Heart right ventricle (tissue), 16 donors: ENCODE measurements at regions of chrX and their contacts with region 1.

Region 1: DNA sequence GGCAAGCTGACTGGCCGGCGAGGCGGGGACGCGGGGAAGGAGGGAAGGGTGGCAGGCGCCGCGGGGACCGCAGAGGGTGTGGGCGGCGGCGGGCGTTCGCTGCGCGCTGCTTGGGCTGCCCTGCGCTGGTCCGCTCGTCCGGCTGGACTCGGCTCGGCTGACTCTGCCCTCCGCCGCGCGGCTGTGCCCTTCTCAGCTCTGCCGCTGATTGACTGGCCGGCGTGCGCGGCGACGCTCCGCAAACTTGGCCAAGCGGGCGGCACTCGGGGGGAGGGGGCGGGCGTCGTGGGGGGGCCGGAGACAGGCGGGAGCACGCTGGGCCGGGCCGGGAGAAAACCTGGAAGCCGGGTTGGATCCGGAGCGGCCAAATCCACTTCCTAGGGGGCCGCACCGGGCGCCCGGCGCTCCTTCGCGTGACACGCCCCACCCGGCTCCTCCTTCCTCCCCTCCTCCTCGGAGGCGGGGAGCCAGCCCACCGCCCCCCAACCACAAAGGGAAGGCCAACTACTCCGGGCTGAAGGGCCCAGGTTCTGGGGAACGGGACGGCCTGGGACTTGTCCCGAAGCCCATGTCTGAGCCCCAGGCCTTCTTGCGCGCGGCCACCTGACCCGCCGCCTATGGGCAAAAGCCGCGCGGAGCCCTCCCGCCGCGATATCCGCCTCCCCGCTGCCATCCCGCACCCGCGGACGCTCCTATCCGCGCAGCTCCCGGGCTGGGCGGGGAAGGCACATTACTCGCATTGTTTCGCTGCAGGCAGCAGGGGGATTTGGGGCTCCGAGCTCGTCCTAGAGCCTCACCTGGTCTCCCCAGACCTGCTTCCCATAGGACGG is at the start of gene GPC4:
- DNase-seq: peak; percentile 51 to 60
- ATAC-seq: peak; percentile 80 to 93 (median 86)
- H3K4me3 ChIP-seq: peak within 1 kb of the TSS; percentile 49 to 67 (median 58)
- H3K27ac ChIP-seq: peak within 1 kb of the TSS in 8 of 10 donors; percentile 7 to 58 (median 25)
- H3K4me1 ChIP-seq: no peaks in the 10 kb centered on the region
- H3K27me3 ChIP-seq: peaks cover 0 to 81% (median 0%) of the 10 kb centered on the region in 7 donors
- CTCF ChIP-seq: no peak
- total RNA-seq, gene GPC4: 4.7 to 10.0 (median 6.6) TPM

Region 2: GRCh38 chrX:133335027-133335426 is 80.5 kb before region 1 on chrX:
- intact Hi-C with region 1: loop called in 1 of 10 experiments (anchors 10 kb)
- DNase-seq: peak in 1 of 2 donors; percentile 3
- ATAC-seq: no peak
- H3K4me3 ChIP-seq: no peak overlapping the region
- H3K27ac ChIP-seq: no peak overlapping the region
- H3K4me1 ChIP-seq: no peaks in the 10 kb centered on the region
- H3K27me3 ChIP-seq: peaks cover 0 to 35% (median 0%) of the 10 kb centered on the region in 7 donors
- CTCF ChIP-seq: peak in 8 of 9 donors; percentile 24 to 61 (median 48)